Panc1 (cell line): ENCODE measurements at regions of chr7 and their contacts with region 1.

Region 1: DNA sequence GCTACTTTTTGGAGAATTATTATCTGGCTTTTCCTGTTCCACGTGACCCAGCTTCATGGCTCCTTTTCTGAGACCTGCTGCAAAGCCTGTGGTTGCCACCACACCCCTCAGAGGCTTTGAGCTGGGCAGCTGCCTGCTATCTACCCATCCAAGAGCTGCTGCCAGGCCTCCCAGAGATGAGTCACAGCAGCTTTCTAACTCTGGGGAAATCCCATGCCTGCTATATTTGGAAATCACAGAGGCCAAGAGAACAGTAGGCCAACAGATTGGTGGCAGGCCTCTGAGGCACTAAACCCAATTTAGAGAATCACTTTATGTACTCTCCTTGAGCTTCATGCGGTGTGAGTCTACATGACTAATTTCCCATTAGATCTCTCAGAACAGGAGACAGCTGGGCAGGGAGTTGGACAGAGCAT is 35.2 kb downstream of the SGCE start:
- DNase-seq: peak; percentile 94
- ATAC-seq: peak; percentile 99
- H3K4me3 ChIP-seq: no peak overlapping the region
- H3K27ac ChIP-seq: no peak overlapping the region
- H3K4me1 ChIP-seq: peaks cover 4% of the 10 kb centered on the region; the same call in 1 of the 2 replicates
- H3K27me3 ChIP-seq: no peaks in the 10 kb centered on the region
- CTCF ChIP-seq: no peak

Region 2: DNA sequence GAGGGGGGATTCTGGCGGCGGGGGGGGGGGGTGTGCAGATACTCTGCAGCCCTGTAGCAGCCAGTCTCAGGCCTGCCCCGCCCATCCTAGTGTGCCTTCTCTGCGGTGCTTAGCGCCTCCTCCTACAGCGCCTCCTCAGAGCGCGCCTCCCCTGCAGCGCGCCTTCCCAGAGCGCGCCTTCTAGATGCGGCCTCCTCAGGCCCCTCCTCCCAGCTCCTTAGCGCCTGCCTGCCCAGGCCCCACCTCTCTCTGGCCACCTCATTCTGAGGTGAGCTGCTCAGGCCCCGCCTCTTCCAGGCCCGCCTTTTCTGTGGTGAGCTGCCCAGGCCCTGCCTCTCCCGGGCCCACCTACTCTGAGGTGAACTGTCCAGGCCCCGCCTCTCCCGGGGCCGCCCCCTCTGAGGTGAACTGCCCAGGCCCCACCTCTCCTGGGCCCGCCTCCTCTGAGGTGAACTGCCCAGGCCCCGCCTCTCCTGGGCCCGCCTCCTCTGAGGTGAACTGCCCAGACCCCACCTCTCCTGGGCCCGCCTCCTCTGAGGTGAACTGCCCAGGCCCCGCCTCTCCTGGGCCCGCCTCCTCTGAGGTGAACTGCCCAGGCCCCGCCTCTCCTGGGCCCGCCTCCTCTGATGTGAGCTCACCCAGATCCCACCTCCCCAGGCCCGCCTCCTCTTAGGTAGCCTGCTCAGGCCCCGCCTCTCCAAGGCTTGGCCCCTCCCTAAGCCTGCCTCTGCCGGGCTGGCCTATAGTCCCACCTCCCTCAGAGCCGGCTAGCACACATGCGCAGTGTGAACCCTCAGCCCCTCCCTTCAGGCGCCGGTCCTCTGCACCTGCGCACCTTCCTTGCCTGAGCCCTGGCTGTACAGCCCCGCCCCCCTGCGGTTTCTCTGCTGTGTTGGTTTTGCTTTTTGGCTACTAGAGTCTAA is 37.3 kb after region 1 on chr7:
- CTCF ChIA-PET with region 1: no interaction called
- POLR2A ChIA-PET with region 1: interaction called, 19 read pairs
- in situ Hi-C with region 1: no loop called
- intact Hi-C with region 1: no loop called
- DNase-seq: peak; percentile 93
- ATAC-seq: peak; percentile 93
- H3K4me3 ChIP-seq: peak overlapping the region; percentile 66 to 88
- H3K27ac ChIP-seq: no peak overlapping the region; the same call in 1 of the 2 replicates
- H3K4me1 ChIP-seq: peaks cover 5% of the 10 kb centered on the region; the same call in 1 of the 2 replicates
- H3K27me3 ChIP-seq: no peaks in the 10 kb centered on the region
- CTCF ChIP-seq: no peak